ENCODE measurements at regions of chrX and their contacts with region 1.

Region 1: GRCh38 chrX:151151665-151152267 is 24.6 kb upstream of the GPR50 start:
- DNase-seq: peak; percentile 15 to 46
- H3K4me3 ChIP-seq: no peak overlapping the region
- H3K27ac ChIP-seq: no peak overlapping the region
- H3K4me1 ChIP-seq: no peaks in the 10 kb centered on the region
- H3K27me3 ChIP-seq: peaks cover 60% of the 10 kb centered on the region
- CTCF ChIP-seq: peak; percentile 98

Region 2: DNA sequence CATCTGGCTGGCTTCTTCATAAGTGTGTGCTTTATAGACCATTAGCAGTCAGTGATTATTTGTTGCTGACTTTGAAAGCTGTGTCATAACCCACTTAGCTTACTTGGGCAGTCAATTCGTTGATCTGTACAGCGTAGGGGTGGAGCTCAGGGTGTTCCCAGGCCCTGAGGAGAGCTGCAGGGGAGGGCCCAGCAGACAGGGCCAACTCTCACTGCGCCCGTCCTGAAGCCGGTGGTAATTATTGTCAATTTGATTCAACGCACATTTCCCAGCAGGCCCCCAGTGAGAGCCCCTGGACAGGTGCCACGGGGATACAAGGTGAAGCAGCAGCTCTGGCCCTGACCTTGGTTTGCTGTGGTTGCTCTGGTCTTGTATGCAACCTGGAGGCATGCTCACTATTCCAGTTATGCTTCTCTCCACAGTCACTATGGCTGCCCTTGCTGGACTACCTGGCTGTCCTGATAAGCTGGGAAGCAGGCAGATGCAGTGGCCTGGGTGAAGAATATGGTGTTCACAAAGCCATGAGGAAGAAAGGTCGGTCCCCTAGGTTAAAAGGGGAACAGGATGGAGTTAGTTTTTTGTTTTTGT is 208.7 kb before region 1 on chrX:
- CTCF ChIA-PET with region 1: no interaction called
- POLR2A ChIA-PET with region 1: no interaction called
- intact Hi-C with region 1: no loop called
- DNase-seq: no peak
- H3K4me3 ChIP-seq: no peak overlapping the region
- H3K27ac ChIP-seq: no peak overlapping the region
- H3K4me1 ChIP-seq: no peaks in the 10 kb centered on the region
- H3K27me3 ChIP-seq: peaks cover 45% of the 10 kb centered on the region
- CTCF ChIP-seq: no peak

Region 3: DNA sequence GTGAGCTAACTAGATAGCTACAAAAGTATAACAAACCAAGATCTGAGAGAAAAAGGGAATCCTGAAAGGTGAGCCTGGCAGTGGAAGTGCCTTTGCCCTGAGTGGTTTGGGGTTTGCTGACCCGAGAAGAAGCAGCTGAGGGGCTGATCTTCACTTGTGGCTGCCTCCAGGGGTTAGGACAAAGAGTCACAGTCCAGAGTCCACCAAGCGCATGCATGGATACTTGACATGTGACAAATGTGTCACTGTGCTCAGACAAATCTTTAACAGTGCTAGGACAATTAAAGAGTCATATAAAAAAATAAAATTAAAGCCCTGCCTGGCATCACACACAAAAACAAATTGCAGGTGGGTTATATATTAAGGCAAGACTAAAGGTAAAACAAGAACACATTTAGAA is 142.2 kb before region 1 on chrX:
- CTCF ChIA-PET with region 1: no interaction called
- POLR2A ChIA-PET with region 1: no interaction called
- intact Hi-C with region 1: no loop called
- DNase-seq: no peak
- H3K4me3 ChIP-seq: no peak overlapping the region
- H3K27ac ChIP-seq: no peak overlapping the region
- H3K4me1 ChIP-seq: no peaks in the 10 kb centered on the region
- H3K27me3 ChIP-seq: peaks cover 7% of the 10 kb centered on the region
- CTCF ChIP-seq: no peak

Region 4: GRCh38 chrX:151505796-151506195 is 354.0 kb after region 1 on chrX:
- CTCF ChIA-PET with region 1: no interaction called
- POLR2A ChIA-PET with region 1: no interaction called
- intact Hi-C with region 1: loop called (anchors 10 kb)
- DNase-seq: peak in 1 of 2 experiments; percentile 22
- H3K4me3 ChIP-seq: no peak overlapping the region
- H3K27ac ChIP-seq: no peak overlapping the region
- H3K4me1 ChIP-seq: no peaks in the 10 kb centered on the region
- H3K27me3 ChIP-seq: peaks cover 36% of the 10 kb centered on the region
- CTCF ChIP-seq: peak; percentile 74

Region 5: GRCh38 chrX:151680805-151681204 is 529.0 kb after region 1 on chrX:
- CTCF ChIA-PET with region 1: no interaction called
- POLR2A ChIA-PET with region 1: no interaction called
- intact Hi-C with region 1: loop called (anchors 1 kb)
- DNase-seq: peak; percentile 39 to 49
- H3K4me3 ChIP-seq: no peak overlapping the region
- H3K27ac ChIP-seq: no peak overlapping the region
- H3K4me1 ChIP-seq: no peaks in the 10 kb centered on the region
- H3K27me3 ChIP-seq: peaks cover 48% of the 10 kb centered on the region
- CTCF ChIP-seq: peak; percentile 94

Region 6: DNA sequence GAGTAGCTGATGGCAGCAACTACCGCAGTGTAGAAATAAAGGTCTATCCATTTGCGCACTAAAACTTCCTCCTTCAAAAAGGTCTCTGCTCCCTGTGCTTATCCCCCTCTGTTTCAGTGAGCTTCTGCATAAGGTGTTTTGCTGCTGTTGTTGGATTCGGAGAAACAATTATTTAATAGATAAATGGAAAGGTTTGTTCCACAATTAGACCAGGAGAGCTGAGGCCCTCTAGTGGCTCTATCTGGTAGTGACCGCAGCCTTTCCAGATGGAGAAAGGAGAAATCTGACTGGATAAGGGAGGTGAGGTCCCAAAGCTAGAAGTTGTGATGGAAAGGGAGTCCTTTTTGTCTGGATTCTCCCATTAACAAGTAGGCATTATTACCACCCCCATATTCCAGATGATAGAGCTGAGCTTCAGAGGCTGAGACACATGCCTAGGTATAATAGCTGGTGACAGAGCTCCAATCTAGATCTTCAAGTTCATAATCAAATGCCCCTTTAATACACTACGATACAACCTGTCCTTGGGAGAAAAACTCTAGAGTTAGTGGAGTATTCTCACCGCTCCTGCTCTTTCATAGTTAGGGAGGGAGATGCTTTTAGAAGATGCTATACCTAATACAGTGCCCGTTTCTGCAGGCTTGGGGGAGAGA is 1480.8 kb after region 1 on chrX:
- CTCF ChIA-PET with region 1: no interaction called
- POLR2A ChIA-PET with region 1: no interaction called
- intact Hi-C with region 1: loop called (anchors 5 kb)
- DNase-seq: peak; percentile 49 to 62
- H3K4me3 ChIP-seq: no peak overlapping the region
- H3K27ac ChIP-seq: no peak overlapping the region
- H3K4me1 ChIP-seq: no peaks in the 10 kb centered on the region
- H3K27me3 ChIP-seq: no peaks in the 10 kb centered on the region
- CTCF ChIP-seq: peak; percentile 98

Region 7: DNA sequence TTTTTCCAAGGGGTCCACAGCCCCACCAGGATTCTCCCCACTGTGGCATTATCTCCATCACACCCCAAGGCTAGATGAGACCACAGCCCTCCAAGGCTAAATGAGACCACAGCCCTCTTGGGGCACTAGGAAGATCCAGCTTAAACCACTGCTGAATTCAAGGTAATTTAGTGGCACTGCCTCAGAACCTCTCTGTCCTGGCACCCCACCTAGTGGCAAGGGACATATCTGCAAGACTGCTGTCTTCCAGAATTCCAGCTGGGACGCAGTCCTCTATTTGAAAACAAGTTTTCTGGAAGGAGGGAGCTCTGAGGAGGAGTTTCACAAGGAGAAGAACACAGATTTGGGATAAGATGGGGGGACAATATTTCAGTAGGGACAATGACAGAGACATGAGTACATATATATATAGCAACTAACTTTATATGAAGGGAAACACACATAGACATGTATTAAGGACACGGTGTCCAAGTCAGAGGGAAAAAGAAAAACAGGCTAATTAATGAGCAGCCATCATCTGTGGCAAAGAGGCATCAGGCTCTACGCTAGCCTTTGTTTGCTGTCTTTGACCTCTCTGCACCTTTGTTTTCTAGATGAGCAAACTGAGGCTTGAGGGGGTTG is 1669.5 kb after region 1 on chrX:
- CTCF ChIA-PET with region 1: no interaction called
- POLR2A ChIA-PET with region 1: no interaction called
- intact Hi-C with region 1: loop called (anchors 1 kb)
- DNase-seq: peak; percentile 53 to 55
- H3K4me3 ChIP-seq: no peak overlapping the region
- H3K27ac ChIP-seq: no peak overlapping the region
- H3K4me1 ChIP-seq: no peaks in the 10 kb centered on the region
- H3K27me3 ChIP-seq: no peaks in the 10 kb centered on the region
- CTCF ChIP-seq: peak; percentile 97

Region 8: GRCh38 chrX:152926279-152926678 is 1774.5 kb after region 1 on chrX:
- CTCF ChIA-PET with region 1: no interaction called
- POLR2A ChIA-PET with region 1: no interaction called
- intact Hi-C with region 1: loop called (anchors 5 kb)
- DNase-seq: peak; percentile 89 to 93
- H3K4me3 ChIP-seq: no peak overlapping the region
- H3K27ac ChIP-seq: no peak overlapping the region
- H3K4me1 ChIP-seq: peaks cover 11% of the 10 kb centered on the region
- H3K27me3 ChIP-seq: no peaks in the 10 kb centered on the region
- CTCF ChIP-seq: peak; percentile 90

Measured in PC-9 (cell line).